Activated naive CD4-positive, alpha-beta T cell treated with anti-CD3 and anti-CD28 coated beads, Interleukin-2, amount 10 ng/mL, durations not matched to agents 7 days and 5 days (primary cell): ENCODE measurements at regions of chr15 and their contacts with region 1.

Region 1: DNA sequence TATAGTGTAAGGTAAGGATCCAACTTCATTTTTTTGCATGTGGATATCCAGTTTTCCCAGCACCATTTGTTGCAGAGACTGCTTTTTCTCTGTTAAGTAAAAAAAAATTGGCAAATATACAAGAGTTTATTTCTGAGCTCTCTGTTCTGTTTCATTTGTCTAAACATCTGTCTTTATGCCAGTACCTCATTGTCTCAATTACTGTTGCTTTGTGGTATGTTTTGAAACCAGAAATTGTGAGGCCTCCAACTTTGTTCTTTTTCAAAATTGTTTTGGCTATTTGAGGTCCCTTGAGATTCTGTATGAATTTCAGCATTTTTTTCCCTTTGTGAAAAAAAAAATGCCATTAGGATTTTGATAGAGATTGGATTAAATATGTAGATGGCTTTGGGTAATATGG is 150.5 kb downstream of the MINAR1 start:
- DNase-seq: no peak
- H3K4me3 Mint-ChIP-seq: no peak overlapping the region
- H3K27ac Mint-ChIP-seq: no peak overlapping the region
- H3K4me1 Mint-ChIP-seq: no peaks in the 10 kb centered on the region
- H3K27me3 Mint-ChIP-seq: peaks cover 3% of the 10 kb centered on the region

Region 2: DNA sequence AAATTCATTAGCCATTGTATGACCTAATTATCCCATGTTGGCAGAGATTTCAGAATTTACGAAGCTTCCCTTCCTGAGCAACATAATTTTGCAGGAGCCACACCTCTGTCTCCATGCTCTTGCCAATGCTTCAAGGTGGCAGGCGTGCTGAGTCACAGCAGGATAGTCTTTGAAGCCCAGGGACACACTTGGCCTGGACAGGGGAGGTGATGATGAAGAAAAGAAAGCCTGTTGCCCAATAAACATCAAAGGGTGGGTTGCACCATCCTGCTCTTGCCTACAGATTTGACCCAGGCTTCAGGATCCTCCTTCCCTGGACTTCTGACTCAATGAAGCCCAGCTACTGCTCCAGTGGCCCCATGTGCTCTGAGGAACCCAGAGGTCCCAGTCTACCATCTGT is 33.5 kb before region 1 on chr15:
- CTCF ChIA-PET with region 1: no interaction called
- DNase-seq: no peak
- H3K4me3 Mint-ChIP-seq: no peak overlapping the region
- H3K27ac Mint-ChIP-seq: no peak overlapping the region
- H3K4me1 Mint-ChIP-seq: no peaks in the 10 kb centered on the region
- H3K27me3 Mint-ChIP-seq: no peaks in the 10 kb centered on the region

Region 3: GRCh38 chr15:79596051-79596507 is 13.4 kb after region 1 on chr15:
- CTCF ChIA-PET with region 1: interaction called, 17 read pairs
- DNase-seq: peak; percentile 72
- H3K4me3 Mint-ChIP-seq: no peak overlapping the region
- H3K27ac Mint-ChIP-seq: no peak overlapping the region
- H3K4me1 Mint-ChIP-seq: no peaks in the 10 kb centered on the region
- H3K27me3 Mint-ChIP-seq: peaks cover 10% of the 10 kb centered on the region